ENCODE measurements at regions of chr6 and their contacts with region 1.

Region 1: GRCh38 chr6:139219271-139219729 is 72.5 kb downstream of the TXLNB start:
- H3K4me3 ChIP-seq: no peak overlapping the region
- H3K27ac ChIP-seq: no peak overlapping the region
- H3K4me1 ChIP-seq: no peaks in the 10 kb centered on the region
- CTCF ChIP-seq: peak; percentile 88

Region 2: GRCh38 chr6:138907167-138907566 is 312.1 kb before region 1 on chr6:
- CTCF ChIA-PET with region 1: no interaction called
- POLR2A ChIA-PET with region 1: no interaction called
- H3K4me3 ChIP-seq: no peak overlapping the region
- H3K27ac ChIP-seq: no peak overlapping the region
- H3K4me1 ChIP-seq: no peaks in the 10 kb centered on the region
- CTCF ChIP-seq: no peak

Region 3: GRCh38 chr6:139230391-139230840 is 11.1 kb after region 1 on chr6:
- CTCF ChIA-PET with region 1: interaction called, 13 read pairs
- POLR2A ChIA-PET with region 1: no interaction called
- H3K4me3 ChIP-seq: no peak overlapping the region
- H3K27ac ChIP-seq: no peak overlapping the region
- H3K4me1 ChIP-seq: peaks cover 7% of the 10 kb centered on the region; the same call in 1 of the 2 replicates
- CTCF ChIP-seq: peak; percentile 72

Region 4: GRCh38 chr6:139369568-139370282 is 150.4 kb after region 1 on chr6:
- CTCF ChIA-PET with region 1: interaction called, 86 read pairs
- POLR2A ChIA-PET with region 1: interaction called, 11 read pairs
- H3K4me3 ChIP-seq: no peak overlapping the region
- H3K27ac ChIP-seq: peak overlapping the region; percentile 16; the same call in 1 of the 2 replicates
- H3K4me1 ChIP-seq: peaks cover 34% of the 10 kb centered on the region
- CTCF ChIP-seq: peak; percentile 40